CD4-positive, alpha-beta memory T cell (primary cell): ENCODE measurements at regions of chr14 and their contacts with region 1.

Region 1: DNA sequence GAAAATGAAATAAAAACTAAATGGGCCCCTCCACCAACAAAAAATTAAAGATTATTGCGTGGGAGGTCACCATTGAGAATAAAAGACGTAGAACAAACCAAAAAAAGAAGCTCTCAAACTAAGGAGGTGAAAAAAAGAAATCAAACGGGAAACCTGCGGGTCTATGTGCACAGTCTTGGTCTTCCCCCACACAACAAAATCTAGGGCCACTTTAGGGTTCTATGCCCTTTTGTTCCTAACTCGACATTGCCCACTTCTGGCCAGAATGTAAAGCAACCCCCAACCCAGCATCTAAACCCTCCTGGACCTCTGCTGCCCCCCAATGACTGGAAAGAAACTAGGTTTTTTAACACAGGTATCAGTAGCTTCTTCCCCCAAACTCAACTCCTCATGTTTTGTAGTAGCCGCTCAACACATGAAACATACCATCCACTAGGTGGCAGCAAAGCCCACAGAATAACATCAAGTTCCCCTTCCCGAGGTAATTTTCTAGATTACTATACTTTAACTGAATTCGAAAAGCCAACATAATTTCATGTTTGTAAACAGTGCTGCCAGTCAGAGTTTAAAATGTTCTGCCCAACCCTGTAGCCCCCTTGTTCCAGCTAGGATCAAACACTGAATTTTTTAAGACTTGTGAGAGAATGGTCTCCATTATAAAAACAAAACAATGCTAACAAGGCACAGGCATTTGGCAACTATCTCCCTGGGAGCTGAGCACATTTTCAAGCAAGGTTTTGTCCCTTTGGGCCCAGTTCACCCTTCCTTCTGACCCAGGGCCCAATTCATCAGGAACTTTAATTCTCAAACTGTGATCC is 18.7 kb downstream of the DAD1 start:
- DNase-seq: peak; percentile 94 to 97 (median 96)
- H3K4me3 ChIP-seq: peak overlapping the region; percentile 6 to 41
- H3K4me3 Mint-ChIP-seq: peak overlapping the region; percentile 54 to 85 (median 80)
- H3K27ac ChIP-seq: peak overlapping the region; percentile 69
- H3K27ac Mint-ChIP-seq: peak overlapping the region; percentile 95 to 100 (median 98)
- H3K4me1 ChIP-seq: peaks cover 52% of the 10 kb centered on the region
- H3K4me1 Mint-ChIP-seq: peaks cover 38 to 57% (median 46%) of the 10 kb centered on the region in 4 donors
- H3K27me3 ChIP-seq: no peaks in the 10 kb centered on the region
- H3K27me3 Mint-ChIP-seq: no peaks in the 10 kb centered on the region

Region 2: GRCh38 chr14:21852061-21852664 is 718.2 kb before region 1 on chr14:
- CTCF ChIA-PET with region 1: interaction called, 7 read pairs
- POLR2A ChIA-PET with region 1: interaction called, 10 read pairs
- intact Hi-C with region 1: no loop called
- DNase-seq: peak; percentile 62 to 69 (median 66)
- H3K4me3 ChIP-seq: peak overlapping the region in 1 of 2 donors; percentile 27
- H3K4me3 Mint-ChIP-seq: peak overlapping the region; percentile 77 to 87 (median 82)
- H3K27ac ChIP-seq: no peak overlapping the region
- H3K27ac Mint-ChIP-seq: peak overlapping the region; percentile 58 to 93 (median 81)
- H3K4me1 ChIP-seq: no peaks in the 10 kb centered on the region
- H3K4me1 Mint-ChIP-seq: peaks cover 5 to 14% (median 9%) of the 10 kb centered on the region in 4 donors
- H3K27me3 ChIP-seq: no peaks in the 10 kb centered on the region
- H3K27me3 Mint-ChIP-seq: peaks cover 5 to 12% of the 10 kb centered on the region in 2 donors

Region 3: DNA sequence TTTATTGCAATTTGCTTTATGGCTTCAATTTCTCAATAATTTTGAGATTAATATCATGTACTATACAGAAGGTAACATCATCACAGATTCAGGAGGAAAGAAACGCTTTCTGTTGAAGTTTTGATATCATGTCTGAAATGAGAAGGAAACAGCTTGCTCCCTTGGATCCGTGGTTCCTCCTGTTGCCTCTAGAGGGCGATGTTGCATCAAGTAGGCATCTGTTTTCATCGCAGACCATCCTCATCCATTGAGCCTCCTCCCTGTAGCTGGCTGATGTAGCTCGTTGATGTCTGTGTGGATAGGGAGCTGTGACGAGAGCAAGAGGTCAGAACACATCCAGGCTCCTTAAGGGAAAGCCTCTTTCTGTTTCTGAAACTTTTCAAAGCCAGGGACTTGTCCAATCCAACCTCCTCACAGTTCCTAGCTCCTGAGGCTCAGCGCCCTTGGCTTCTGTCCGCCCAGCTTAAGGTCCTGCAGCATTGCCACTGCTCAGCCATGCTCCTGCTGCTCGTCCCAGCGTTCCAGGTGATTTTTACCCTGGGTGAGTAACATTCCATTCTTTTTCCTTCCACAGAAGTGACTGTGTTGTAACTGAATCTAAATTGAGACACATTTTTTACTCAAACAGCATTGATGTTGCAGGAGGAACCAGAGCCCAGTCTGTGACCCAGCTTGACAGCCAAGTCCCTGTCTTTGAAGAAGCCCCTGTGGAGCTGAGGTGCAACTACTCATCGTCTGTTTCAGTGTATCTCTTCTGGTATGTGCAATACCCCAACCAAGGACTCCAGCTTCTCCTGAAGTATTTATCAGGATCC is 592.0 kb before region 1 on chr14:
- CTCF ChIA-PET with region 1: interaction called, 21 read pairs
- POLR2A ChIA-PET with region 1: interaction called, 15 read pairs
- intact Hi-C with region 1: no loop called
- DNase-seq: peak; percentile 60 to 63 (median 60)
- H3K4me3 ChIP-seq: no peak overlapping the region
- H3K4me3 Mint-ChIP-seq: peak overlapping the region; percentile 68 to 81 (median 74)
- H3K27ac ChIP-seq: no peak overlapping the region
- H3K27ac Mint-ChIP-seq: peak overlapping the region in 5 of 7 donors; percentile 14 to 83 (median 66)
- H3K4me1 ChIP-seq: peaks cover 7% of the 10 kb centered on the region
- H3K4me1 Mint-ChIP-seq: peaks cover 6 to 30% (median 19%) of the 10 kb centered on the region in 4 donors
- H3K27me3 ChIP-seq: no peaks in the 10 kb centered on the region
- H3K27me3 Mint-ChIP-seq: peaks cover 0 to 2% of the 10 kb centered on the region in 2 donors

Region 4: GRCh38 chr14:22491683-22492621 is 78.4 kb before region 1 on chr14:
- CTCF ChIA-PET with region 1: interaction called, 6 read pairs
- POLR2A ChIA-PET with region 1: interaction called, 405 read pairs
- intact Hi-C with region 1: no loop called
- DNase-seq: peak in 2 of 5 donors; percentile 36 to 80
- H3K4me3 ChIP-seq: peak overlapping the region in 1 of 2 donors; percentile 55
- H3K4me3 Mint-ChIP-seq: peak overlapping the region; percentile 86 to 96 (median 90)
- H3K27ac ChIP-seq: peak overlapping the region; percentile 67
- H3K27ac Mint-ChIP-seq: peak overlapping the region; percentile 91 to 100 (median 94)
- H3K4me1 ChIP-seq: peaks cover 6% of the 10 kb centered on the region
- H3K4me1 Mint-ChIP-seq: peaks cover 1 to 76% (median 9%) of the 10 kb centered on the region in 4 donors
- H3K27me3 ChIP-seq: no peaks in the 10 kb centered on the region
- H3K27me3 Mint-ChIP-seq: no peaks in the 10 kb centered on the region

Region 5: GRCh38 chr14:22589096-22589839 is 18.9 kb after region 1 on chr14 and contains the start of gene DAD1:
- CTCF ChIA-PET with region 1: interaction called, 174 read pairs
- POLR2A ChIA-PET with region 1: interaction called, 387 read pairs
- intact Hi-C with region 1: loop called (anchors 1 kb)
- DNase-seq: peak; percentile 100
- H3K4me3 ChIP-seq: peak within 1 kb of the TSS; percentile 85 to 87
- H3K4me3 Mint-ChIP-seq: peak within 1 kb of the TSS; percentile 92 to 100 (median 97)
- H3K27ac ChIP-seq: peak within 1 kb of the TSS; percentile 88
- H3K27ac Mint-ChIP-seq: peak within 1 kb of the TSS; percentile 99 to 100 (median 99)
- H3K4me1 ChIP-seq: peaks cover 50% of the 10 kb centered on the region
- H3K4me1 Mint-ChIP-seq: peaks cover 39 to 63% (median 51%) of the 10 kb centered on the region in 4 donors
- H3K27me3 ChIP-seq: no peaks in the 10 kb centered on the region
- H3K27me3 Mint-ChIP-seq: peaks cover 2% of the 10 kb centered on the region in 2 donors
- total RNA-seq, gene DAD1: 110 to 124 TPM

Region 6: DNA sequence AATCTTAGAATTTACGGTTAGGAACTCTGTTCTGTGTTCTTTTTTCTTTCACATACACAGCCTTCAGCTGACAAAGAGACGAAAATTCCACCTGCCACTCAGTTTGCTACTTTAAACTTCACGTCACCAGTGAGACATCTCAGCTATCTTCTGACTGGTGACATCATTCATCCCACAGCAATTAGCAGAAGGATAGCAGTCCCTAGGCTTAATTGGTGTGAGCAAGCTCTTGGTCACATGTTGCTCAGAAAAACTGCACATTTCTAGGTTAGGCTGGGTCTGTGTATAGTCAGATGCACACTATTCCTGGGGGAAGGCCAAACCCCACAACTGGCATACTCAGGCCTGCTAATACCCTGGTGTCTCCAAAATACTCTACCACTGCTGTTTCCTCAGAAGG is 221.0 kb after region 1 on chr14:
- CTCF ChIA-PET with region 1: no interaction called
- POLR2A ChIA-PET with region 1: no interaction called
- intact Hi-C with region 1: no loop called
- DNase-seq: no peak
- H3K4me3 ChIP-seq: no peak overlapping the region
- H3K4me3 Mint-ChIP-seq: no peak overlapping the region
- H3K27ac ChIP-seq: no peak overlapping the region
- H3K27ac Mint-ChIP-seq: no peak overlapping the region
- H3K4me1 ChIP-seq: no peaks in the 10 kb centered on the region
- H3K4me1 Mint-ChIP-seq: peaks cover 0 to 2% (median 0%) of the 10 kb centered on the region in 4 donors
- H3K27me3 ChIP-seq: no peaks in the 10 kb centered on the region
- H3K27me3 Mint-ChIP-seq: peaks cover 9 to 12% of the 10 kb centered on the region in 2 donors

Region 7: DNA sequence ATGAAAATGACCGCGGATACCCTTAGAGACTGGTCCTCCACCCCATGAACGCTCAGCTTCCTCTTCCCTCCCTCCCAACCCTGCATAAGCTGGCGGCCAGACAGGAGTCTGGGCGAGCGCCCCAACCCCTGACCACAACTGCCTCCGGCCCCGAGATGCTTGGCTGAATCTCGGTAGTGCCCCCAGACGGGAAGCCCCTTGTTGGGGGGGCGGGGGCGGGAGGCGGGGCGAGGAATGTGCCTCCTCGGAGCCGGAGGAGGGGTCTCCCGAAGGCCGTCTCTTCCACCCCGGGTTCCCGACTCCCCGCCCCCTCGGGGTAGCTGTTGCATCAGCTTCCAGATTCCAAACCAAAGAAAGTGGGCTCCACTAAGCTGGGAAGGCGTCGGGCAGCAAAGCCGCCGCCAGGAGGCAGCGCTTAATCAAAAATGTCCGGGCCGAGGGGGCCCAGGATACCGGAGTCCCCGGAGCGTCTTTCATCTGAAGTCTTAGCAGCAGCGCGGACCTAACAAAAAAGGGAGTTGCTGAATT is 252.3 kb after region 1 on chr14:
- CTCF ChIA-PET with region 1: interaction called, 38 read pairs
- POLR2A ChIA-PET with region 1: interaction called, 8 read pairs
- intact Hi-C with region 1: no loop called
- DNase-seq: peak; percentile 63 to 70 (median 66)
- H3K4me3 ChIP-seq: peak overlapping the region in 1 of 2 donors; percentile 27
- H3K4me3 Mint-ChIP-seq: peak overlapping the region; percentile 20 to 77 (median 66)
- H3K27ac ChIP-seq: no peak overlapping the region
- H3K27ac Mint-ChIP-seq: peak overlapping the region in 2 of 7 donors; percentile 19 to 43
- H3K4me1 ChIP-seq: peaks cover 7% of the 10 kb centered on the region
- H3K4me1 Mint-ChIP-seq: peaks cover 6 to 22% (median 12%) of the 10 kb centered on the region in 4 donors
- H3K27me3 ChIP-seq: no peaks in the 10 kb centered on the region
- H3K27me3 Mint-ChIP-seq: peaks cover 6 to 16% of the 10 kb centered on the region in 2 donors

Region 8: GRCh38 chr14:22929104-22929847 is 358.9 kb after region 1 on chr14 and contains the start of gene PRMT5:
- CTCF ChIA-PET with region 1: interaction called, 7 read pairs
- POLR2A ChIA-PET with region 1: interaction called, 11 read pairs
- intact Hi-C with region 1: no loop called
- DNase-seq: peak; percentile 98 to 100 (median 99)
- H3K4me3 ChIP-seq: peak within 1 kb of the TSS; percentile 83 to 99
- H3K4me3 Mint-ChIP-seq: no peak within 1 kb of the TSS
- H3K27ac ChIP-seq: peak within 1 kb of the TSS; percentile 91
- H3K27ac Mint-ChIP-seq: peak within 1 kb of the TSS in 1 of 7 donors; percentile 75
- H3K4me1 ChIP-seq: peaks cover 17% of the 10 kb centered on the region
- H3K4me1 Mint-ChIP-seq: peaks cover 9 to 14% (median 12%) of the 10 kb centered on the region in 4 donors
- H3K27me3 ChIP-seq: no peaks in the 10 kb centered on the region
- H3K27me3 Mint-ChIP-seq: no peaks in the 10 kb centered on the region
- total RNA-seq, gene PRMT5: 25.8 to 30.5 TPM